Aorta (tissue), 5 donors: ENCODE measurements at regions of chr12 and their contacts with region 1.

Region 1: GRCh38 chr12:117874842-117875434 is 93.9 kb downstream of the KSR2 start:
- DNase-seq: peak; percentile 77 to 90
- ATAC-seq: peak; percentile 82
- H3K4me3 ChIP-seq: no peak overlapping the region
- H3K27ac ChIP-seq: no peak overlapping the region
- H3K4me1 ChIP-seq: no peaks in the 10 kb centered on the region
- H3K27me3 ChIP-seq: no peaks in the 10 kb centered on the region

Region 2: GRCh38 chr12:118035246-118036041 is 160.5 kb after region 1 on chr12:
- intact Hi-C with region 1: loop called in 1 of 2 experiments (anchors 10 kb)
- DNase-seq: no peak
- ATAC-seq: no peak
- H3K4me3 ChIP-seq: no peak overlapping the region
- H3K27ac ChIP-seq: no peak overlapping the region
- H3K4me1 ChIP-seq: no peaks in the 10 kb centered on the region
- H3K27me3 ChIP-seq: no peaks in the 10 kb centered on the region

Region 3: DNA sequence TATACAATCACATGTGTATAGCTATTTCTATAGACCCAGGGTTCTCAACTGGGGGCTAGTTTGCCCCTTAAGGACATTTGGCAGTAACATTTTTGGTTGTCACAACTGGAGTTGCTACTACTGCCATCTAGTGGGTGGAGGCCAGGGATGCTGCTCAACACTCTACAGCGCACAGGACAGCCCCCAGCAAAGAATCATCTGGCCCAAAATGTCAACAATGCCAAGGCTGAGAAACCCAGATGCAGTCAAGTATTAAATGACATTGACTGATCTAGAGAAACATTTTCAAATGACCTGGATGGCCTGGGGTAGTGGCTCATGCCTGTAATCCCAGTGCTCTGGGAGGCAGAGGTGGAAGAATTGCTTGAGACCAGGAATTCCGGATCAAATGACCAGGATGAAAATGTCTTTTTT is 180.2 kb after region 1 on chr12:
- intact Hi-C with region 1: no loop called
- DNase-seq: peak; percentile 59 to 73
- ATAC-seq: no peak
- H3K4me3 ChIP-seq: no peak overlapping the region
- H3K27ac ChIP-seq: peak overlapping the region in 1 of 2 donors; percentile 66
- H3K4me1 ChIP-seq: peaks cover 0 to 2% of the 10 kb centered on the region in 2 donors
- H3K27me3 ChIP-seq: no peaks in the 10 kb centered on the region

Region 4: GRCh38 chr12:118135788-118136558 is 261.0 kb after region 1 on chr12 and contains the start of gene PEBP1:
- intact Hi-C with region 1: loop called (anchors 10 kb)
- DNase-seq: peak; percentile 97 to 99
- ATAC-seq: peak; percentile 99
- H3K4me3 ChIP-seq: peak within 1 kb of the TSS; percentile 72 to 77
- H3K27ac ChIP-seq: peak within 1 kb of the TSS in 1 of 2 donors; percentile 60
- H3K4me1 ChIP-seq: no peaks in the 10 kb centered on the region
- H3K27me3 ChIP-seq: no peaks in the 10 kb centered on the region
- total RNA-seq, gene PEBP1: 122 to 155 TPM